ENCODE measurements at regions of chr22 and their contacts with region 1.

Region 1: GRCh38 chr22:50525390-50526068 is at the start of gene SCO2:
- DNase-seq: peak; percentile 98
- H3K4me3 ChIP-seq: peak within 1 kb of the TSS; percentile 47 to 66 (median 48)
- H3K27ac ChIP-seq: peak within 1 kb of the TSS; percentile 57
- H3K4me1 ChIP-seq: peaks cover 16% of the 10 kb centered on the region
- H3K27me3 ChIP-seq: peaks cover 0 to 6% of the 10 kb centered on the region in 2 experiments
- CTCF ChIP-seq: peak; percentile 36 to 70
- POLR2A ChIP-seq: peak; percentile 92
- total RNA-seq, gene SCO2: 3.2 and 3.7 TPM in 2 replicates

Region 2: DNA sequence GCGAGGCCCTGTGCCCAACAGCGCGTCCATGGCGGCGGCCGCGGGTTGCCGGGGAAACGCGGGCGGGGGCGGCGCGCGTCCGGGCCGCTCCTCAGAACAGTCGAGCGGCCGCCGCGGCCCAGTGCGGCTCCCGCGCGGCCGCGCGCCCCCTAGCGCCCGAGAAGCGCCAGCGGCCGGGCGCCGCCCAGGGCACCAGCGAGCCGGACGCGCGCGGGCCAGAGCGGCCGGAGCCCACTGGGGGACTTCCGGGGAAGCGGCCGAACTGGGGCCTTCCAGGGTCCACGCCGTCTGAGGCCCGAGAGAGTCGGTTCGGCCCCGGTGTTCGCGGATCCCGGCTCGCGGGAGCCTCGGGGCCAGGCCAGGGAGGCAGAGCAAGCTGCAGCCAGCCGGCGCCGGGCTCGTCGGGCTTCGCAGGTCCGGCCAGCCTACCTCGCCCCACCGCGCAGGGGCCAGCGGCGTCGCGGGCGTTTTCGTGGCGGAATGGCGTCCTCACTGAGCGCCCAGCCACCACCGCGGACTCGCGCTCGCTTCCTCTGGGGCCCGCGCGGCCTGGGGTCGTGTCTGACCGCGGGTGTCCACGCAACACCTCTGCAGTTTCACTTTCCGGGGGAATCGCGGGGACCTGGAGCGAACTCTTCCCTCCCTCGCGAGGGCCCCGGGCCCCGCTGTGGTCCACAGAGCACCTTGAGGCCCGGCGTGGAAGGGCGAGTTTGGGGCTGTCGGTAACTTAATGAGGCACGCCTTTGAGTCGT is 198.4 kb before region 1 on chr22 and contains the start of gene DENND6B:
- CTCF ChIA-PET with region 1: no interaction called
- POLR2A ChIA-PET with region 1: no interaction called
- dilution Hi-C with region 1: no loop called
- intact Hi-C with region 1: no loop called
- DNase-seq: peak; percentile 64
- H3K4me3 ChIP-seq: peak within 1 kb of the TSS; percentile 16 to 58 (median 56)
- H3K27ac ChIP-seq: peak within 1 kb of the TSS; percentile 70
- H3K4me1 ChIP-seq: peaks cover 9% of the 10 kb centered on the region
- H3K27me3 ChIP-seq: no peaks in the 10 kb centered on the region
- CTCF ChIP-seq: peak; percentile 33 to 68
- POLR2A ChIP-seq: peak; percentile 89
- total RNA-seq, gene DENND6B: 2.9 and 5.9 TPM in 2 replicates

Region 3: GRCh38 chr22:50498322-50498890 is 27.1 kb before region 1 on chr22:
- CTCF ChIA-PET with region 1: interaction called, 28 read pairs
- POLR2A ChIA-PET with region 1: no interaction called
- dilution Hi-C with region 1: no loop called
- intact Hi-C with region 1: no loop called
- DNase-seq: peak; percentile 65
- H3K4me3 ChIP-seq: no peak overlapping the region
- H3K27ac ChIP-seq: no peak overlapping the region
- H3K4me1 ChIP-seq: no peaks in the 10 kb centered on the region
- H3K27me3 ChIP-seq: no peaks in the 10 kb centered on the region
- CTCF ChIP-seq: peak; percentile 64 to 71
- POLR2A ChIP-seq: no peak

Region 4: GRCh38 chr22:50507991-50508884 is 17.3 kb before region 1 on chr22 and contains the start of gene NCAPH2:
- CTCF ChIA-PET with region 1: interaction called, 34 read pairs
- POLR2A ChIA-PET with region 1: interaction called, 12 read pairs
- dilution Hi-C with region 1: no loop called
- intact Hi-C with region 1: loop called (anchors 1 kb)
- DNase-seq: peak; percentile 97
- H3K4me3 ChIP-seq: peak within 1 kb of the TSS; percentile 68 to 98 (median 79)
- H3K27ac ChIP-seq: peak within 1 kb of the TSS; percentile 72
- H3K4me1 ChIP-seq: peaks cover 14% of the 10 kb centered on the region
- H3K27me3 ChIP-seq: no peaks in the 10 kb centered on the region
- CTCF ChIP-seq: no peak
- POLR2A ChIP-seq: peak; percentile 75
- total RNA-seq, gene NCAPH2: 42.4 and 43.1 TPM in 2 replicates

Region 5: DNA sequence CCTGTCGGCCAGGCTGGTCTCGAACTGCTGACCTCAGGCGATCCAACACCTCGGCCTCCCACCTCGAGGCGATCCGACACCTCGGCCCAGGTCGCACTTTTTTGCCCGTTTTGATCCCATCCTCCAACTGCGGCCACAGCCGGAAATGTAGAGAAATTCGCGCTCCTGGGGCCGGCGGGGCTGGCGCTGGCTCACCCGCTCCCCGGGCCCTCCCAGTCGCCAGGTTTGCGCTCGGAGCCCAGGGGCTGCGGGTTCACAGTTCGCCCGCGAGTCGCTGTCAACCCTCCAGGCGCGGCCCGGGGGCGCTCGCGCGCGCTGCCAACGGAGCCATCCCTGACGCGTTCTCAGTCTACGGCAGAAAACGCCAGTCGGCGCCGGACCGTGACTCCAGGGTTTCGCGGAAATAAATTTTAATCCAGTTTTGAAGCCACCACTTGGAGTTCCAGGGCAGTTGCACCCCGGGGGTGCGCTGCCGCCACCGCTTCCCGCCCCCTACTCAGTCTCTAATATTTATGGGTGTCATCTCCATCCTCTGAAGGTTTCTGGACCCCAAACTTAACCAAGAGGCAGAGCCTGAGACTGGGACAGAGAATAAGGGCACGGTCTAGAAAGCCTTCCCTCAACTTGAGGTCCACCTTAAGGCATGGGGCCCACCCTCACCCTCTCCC is 18.7 kb after region 1 on chr22:
- CTCF ChIA-PET with region 1: interaction called, 15 read pairs
- POLR2A ChIA-PET with region 1: interaction called, 4 read pairs
- dilution Hi-C with region 1: no loop called
- intact Hi-C with region 1: no loop called
- DNase-seq: peak; percentile 53
- H3K4me3 ChIP-seq: no peak overlapping the region
- H3K27ac ChIP-seq: no peak overlapping the region
- H3K4me1 ChIP-seq: no peaks in the 10 kb centered on the region
- H3K27me3 ChIP-seq: peaks cover 20 to 33% of the 10 kb centered on the region in 2 experiments
- CTCF ChIP-seq: peak; percentile 49 to 81
- POLR2A ChIP-seq: no peak

Region 6: DNA sequence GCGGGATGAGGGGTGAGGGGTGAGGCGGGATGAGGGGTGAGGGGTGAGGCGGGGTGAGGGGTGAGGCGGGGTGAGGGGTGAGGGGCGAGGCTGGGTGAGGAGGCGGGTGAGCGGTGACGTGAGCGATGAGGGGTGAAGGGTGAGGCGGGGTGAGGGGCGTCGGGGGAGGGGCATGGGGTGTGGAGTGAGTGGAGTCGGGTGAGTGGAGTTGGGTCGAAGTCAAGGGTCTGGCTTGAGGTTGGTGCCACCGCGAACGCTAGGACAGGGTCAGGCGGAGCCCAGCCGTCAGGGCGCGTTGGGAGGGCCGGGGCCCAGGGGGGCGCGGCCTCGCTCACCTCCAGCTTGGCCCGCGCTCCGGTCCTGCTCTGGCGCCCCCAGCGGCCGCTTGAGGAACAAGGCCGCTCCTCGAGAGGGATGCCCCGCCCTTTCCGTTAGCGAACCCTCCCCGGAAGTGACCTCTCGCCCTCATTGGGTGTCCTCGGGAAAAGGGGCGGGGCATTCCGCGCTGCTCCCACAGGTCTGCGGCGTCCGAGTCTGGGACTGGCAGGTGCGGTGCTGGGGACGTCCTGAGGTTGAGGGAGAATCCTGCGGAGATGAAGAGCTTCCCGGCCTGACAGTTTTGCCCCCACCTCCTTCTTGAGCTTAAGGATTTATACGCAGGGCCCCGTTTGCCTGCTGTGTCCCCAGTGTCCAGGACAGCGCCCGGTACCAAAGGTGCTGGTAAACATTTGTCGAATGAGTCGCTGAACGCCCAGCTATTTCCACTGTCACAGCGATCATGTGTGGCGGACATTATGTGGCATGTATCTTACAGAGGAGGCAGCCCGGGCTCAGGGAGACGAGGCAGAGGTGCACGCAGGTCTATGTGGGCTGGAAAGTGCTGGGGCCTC is 37.2 kb after region 1 on chr22 and contains the start of gene SYCE3:
- CTCF ChIA-PET with region 1: interaction called, 16 read pairs
- POLR2A ChIA-PET with region 1: no interaction called
- dilution Hi-C with region 1: no loop called
- intact Hi-C with region 1: no loop called
- DNase-seq: peak; percentile 73
- H3K4me3 ChIP-seq: peak within 1 kb of the TSS; percentile 1 to 34 (median 16)
- H3K27ac ChIP-seq: no peak within 1 kb of the TSS
- H3K4me1 ChIP-seq: peaks cover 5% of the 10 kb centered on the region
- H3K27me3 ChIP-seq: peaks cover 8 to 16% of the 10 kb centered on the region in 2 experiments
- CTCF ChIP-seq: peak; percentile 92 to 93
- POLR2A ChIP-seq: no peak
- total RNA-seq, gene SYCE3: not detected in 2 replicates

Region 7: GRCh38 chr22:50582562-50583293 is 57.2 kb after region 1 on chr22 and contains the start of gene CHKB:
- CTCF ChIA-PET with region 1: interaction called, 4 read pairs
- POLR2A ChIA-PET with region 1: interaction called, 4 read pairs
- dilution Hi-C with region 1: no loop called
- intact Hi-C with region 1: loop called (anchors 2 kb)
- DNase-seq: peak; percentile 98
- H3K4me3 ChIP-seq: peak within 1 kb of the TSS; percentile 73 to 87 (median 85)
- H3K27ac ChIP-seq: peak within 1 kb of the TSS; percentile 87
- H3K4me1 ChIP-seq: peaks cover 13% of the 10 kb centered on the region
- H3K27me3 ChIP-seq: peaks cover 0 to 2% of the 10 kb centered on the region in 2 experiments
- CTCF ChIP-seq: no peak
- POLR2A ChIP-seq: peak; percentile 77
- total RNA-seq, gene CHKB: 57.7 and 62.4 TPM in 2 replicates

Measured in endothelial cell of umbilical vein (primary cell).